ENCODE measurements at regions of chr19 and their contacts with region 1.

Region 1: GRCh38 chr19:16247353-16248182 is 49.9 kb downstream of the AP1M1 start:
- DNase-seq: peak; percentile 68
- H3K4me3 Mint-ChIP-seq: no peak overlapping the region
- H3K27ac Mint-ChIP-seq: no peak overlapping the region
- H3K4me1 Mint-ChIP-seq: peaks cover 20% of the 10 kb centered on the region
- H3K27me3 Mint-ChIP-seq: peaks cover 8% of the 10 kb centered on the region

Region 2: GRCh38 chr19:16283210-16284061 is 35.9 kb after region 1 on chr19:
- intact Hi-C with region 1: loop called (anchors 5 kb)
- DNase-seq: peak; percentile 32
- H3K4me3 Mint-ChIP-seq: peak overlapping the region; percentile 74
- H3K27ac Mint-ChIP-seq: peak overlapping the region; percentile 70
- H3K4me1 Mint-ChIP-seq: peaks cover 45% of the 10 kb centered on the region
- H3K27me3 Mint-ChIP-seq: peaks cover 37% of the 10 kb centered on the region

Region 3: DNA sequence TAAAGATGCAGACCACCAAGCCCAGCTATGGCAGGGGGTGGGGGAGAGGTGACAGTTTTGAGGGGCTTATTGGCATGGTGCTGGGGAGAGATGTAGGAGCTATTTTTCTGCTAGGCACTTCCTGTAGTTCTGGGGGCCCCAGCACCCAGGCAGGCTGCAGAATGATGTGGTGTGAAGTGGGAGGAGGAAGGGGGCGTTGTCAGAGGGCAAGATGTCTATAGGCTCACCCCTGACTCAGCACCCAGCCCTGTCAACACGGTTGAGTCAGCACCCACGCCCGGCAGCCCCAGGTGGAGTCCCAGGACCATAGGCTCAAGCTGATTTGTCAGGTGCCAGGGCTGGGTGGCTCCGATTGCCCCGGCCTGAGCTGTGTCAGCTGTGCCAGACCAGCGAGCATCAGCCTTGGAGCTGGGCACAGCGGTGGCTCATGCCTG is 82.8 kb after region 1 on chr19:
- intact Hi-C with region 1: loop called (anchors 2 kb)
- DNase-seq: peak; percentile 89
- H3K4me3 Mint-ChIP-seq: peak overlapping the region; percentile 93
- H3K27ac Mint-ChIP-seq: peak overlapping the region; percentile 79
- H3K4me1 Mint-ChIP-seq: peaks cover 67% of the 10 kb centered on the region
- H3K27me3 Mint-ChIP-seq: peaks cover 9% of the 10 kb centered on the region

Region 4: DNA sequence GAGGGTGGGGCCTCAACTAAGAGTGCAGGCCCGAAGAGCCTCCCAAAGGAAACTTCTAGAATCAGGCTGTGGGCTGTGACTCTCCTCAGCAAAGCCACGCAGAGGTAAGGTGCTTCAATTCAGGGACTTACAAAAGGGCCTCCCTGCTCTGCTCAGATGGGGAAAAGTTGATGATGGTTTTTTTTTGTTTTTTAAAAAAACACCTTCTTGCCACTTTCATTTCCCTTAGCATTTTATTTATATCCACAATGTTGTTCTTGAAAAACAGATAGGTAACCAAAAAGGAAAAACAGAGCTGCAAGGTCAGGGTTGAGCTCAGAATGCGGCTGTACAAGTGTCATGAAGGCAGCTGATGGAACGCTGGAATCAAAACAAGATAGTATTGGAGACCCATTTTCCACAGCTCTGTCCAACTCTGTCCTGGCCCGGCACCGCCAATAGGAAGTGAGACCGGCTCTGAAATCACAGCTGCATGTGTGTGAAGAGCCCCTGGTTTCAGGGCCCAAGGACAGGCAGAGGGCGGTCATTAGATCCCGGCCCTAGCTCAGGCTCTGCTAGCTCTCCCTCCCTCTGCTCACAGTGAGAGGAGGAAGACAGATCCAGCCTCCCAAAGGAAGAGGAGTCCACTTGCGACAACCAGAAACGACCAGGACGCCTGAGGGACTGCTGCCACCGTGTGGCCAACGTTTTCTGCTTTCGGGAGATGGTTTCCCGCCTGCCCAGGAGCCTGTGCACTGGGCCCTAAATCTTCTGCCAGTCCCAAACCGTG is 135.4 kb after region 1 on chr19:
- intact Hi-C with region 1: loop called (anchors 1 kb)
- DNase-seq: peak; percentile 64
- H3K4me3 Mint-ChIP-seq: peak overlapping the region; percentile 62
- H3K27ac Mint-ChIP-seq: no peak overlapping the region
- H3K4me1 Mint-ChIP-seq: peaks cover 40% of the 10 kb centered on the region
- H3K27me3 Mint-ChIP-seq: no peaks in the 10 kb centered on the region

Region 5: GRCh38 chr19:16417660-16418596 is 170.4 kb after region 1 on chr19:
- intact Hi-C with region 1: loop called (anchors 1 kb)
- DNase-seq: peak; percentile 50
- H3K4me3 Mint-ChIP-seq: no peak overlapping the region
- H3K27ac Mint-ChIP-seq: peak overlapping the region; percentile 3
- H3K4me1 Mint-ChIP-seq: peaks cover 5% of the 10 kb centered on the region
- H3K27me3 Mint-ChIP-seq: no peaks in the 10 kb centered on the region